GM13977 (cell line): ENCODE measurements at regions of chr19 and their contacts with region 1.

Region 1: GRCh38 chr19:11496391-11497163 is 9.1 kb downstream of the ZNF653 start:
- DNase-seq: peak; percentile 76
- CTCF ChIP-seq: peak; percentile 80

Region 2: GRCh38 chr19:11321191-11322126 is 175.1 kb before region 1 on chr19:
- in situ Hi-C with region 1: no loop called
- DNase-seq: no peak
- CTCF ChIP-seq: peak; percentile 25

Region 3: DNA sequence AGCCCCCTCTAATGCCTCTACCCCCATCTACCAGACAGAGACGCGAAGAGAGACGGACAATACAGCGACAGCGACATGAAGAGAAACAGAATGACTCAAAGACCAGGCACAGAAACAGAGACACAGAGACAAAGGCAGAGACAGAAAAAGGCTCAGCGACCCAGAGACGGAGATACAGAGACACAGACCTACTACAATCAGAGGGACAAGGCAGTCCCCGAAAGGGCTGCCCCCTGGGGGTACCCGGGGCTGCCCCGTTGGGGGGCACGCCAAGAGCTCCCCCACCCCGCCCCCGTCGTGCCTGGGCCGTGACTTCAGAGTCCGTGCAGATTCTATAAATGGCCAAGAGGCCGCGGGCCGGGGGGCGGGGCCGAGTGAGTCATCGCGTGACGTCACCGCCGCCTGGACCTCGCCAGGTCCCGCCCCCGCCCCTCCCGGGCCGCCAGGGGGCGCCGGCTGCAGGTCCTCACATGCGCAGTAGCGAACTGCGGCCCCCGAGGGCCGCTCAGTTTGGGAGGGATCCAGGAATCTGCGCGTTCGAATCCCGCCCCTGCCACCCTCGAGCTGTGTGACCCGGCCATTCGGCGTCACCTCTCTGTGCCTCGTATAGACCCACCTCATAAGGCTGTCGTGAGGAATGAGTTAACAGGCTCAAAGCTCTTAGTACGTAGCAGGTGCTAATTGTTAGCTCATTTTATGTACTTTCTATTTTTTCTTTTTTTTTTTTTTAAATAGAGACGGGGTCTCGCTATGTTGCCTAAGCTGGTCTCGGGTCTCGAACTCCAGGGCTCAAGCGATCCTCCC is 39.4 kb after region 1 on chr19:
- in situ Hi-C with region 1: no loop called
- DNase-seq: peak; percentile 97
- CTCF ChIP-seq: peak; percentile 92

Region 4: DNA sequence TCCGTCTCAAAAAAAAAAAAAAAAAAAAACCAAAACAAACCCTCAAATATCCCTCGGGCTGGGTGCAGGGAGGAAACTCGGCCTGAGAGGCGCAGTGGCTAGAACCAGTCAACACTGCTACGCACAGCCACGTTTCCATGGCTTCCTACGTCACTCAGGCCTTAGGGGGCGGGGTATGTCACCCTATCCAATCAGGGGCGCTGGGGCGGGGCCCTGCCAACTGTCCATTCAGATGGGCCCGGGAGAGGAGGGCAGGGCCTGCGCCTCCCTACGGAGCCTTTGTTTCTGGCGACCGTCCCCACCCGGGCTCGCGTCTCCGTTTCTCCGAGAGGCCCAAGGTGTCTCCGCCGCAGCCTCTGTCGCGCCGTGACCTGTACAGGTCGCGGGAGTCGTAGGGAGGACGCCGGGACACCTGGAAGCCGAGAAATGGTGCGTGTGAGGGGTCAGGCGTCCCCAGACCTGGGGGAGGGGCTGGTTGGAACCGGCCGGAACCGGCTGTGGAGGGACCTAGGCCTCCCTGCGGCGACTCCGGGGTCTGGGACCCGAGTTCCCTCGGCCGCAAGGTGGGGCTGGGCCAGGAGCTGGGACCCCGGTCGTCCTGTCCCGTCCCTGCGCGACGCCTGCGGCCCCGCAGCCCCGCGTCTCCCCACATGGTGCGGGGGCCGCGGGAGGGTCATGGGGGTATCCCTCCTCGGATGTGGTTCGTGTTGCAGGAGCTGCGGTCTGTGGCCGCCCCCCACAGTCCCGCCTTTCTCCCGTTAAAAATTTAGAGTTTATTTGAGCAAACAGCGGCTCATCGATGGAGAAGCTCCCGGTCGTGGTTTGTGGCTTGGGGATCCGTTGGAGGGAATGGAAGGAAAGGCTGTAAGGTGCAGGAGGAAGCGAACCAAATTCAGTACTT is 100.9 kb after region 1 on chr19 and contains the start of gene ZNF627:
- in situ Hi-C with region 1: loop called (anchors 10 kb)
- DNase-seq: peak; percentile 98
- CTCF ChIP-seq: peak; percentile 0